Heart left ventricle (tissue), 16 donors: ENCODE measurements at regions of chr4 and their contacts with region 1.

Region 1: DNA sequence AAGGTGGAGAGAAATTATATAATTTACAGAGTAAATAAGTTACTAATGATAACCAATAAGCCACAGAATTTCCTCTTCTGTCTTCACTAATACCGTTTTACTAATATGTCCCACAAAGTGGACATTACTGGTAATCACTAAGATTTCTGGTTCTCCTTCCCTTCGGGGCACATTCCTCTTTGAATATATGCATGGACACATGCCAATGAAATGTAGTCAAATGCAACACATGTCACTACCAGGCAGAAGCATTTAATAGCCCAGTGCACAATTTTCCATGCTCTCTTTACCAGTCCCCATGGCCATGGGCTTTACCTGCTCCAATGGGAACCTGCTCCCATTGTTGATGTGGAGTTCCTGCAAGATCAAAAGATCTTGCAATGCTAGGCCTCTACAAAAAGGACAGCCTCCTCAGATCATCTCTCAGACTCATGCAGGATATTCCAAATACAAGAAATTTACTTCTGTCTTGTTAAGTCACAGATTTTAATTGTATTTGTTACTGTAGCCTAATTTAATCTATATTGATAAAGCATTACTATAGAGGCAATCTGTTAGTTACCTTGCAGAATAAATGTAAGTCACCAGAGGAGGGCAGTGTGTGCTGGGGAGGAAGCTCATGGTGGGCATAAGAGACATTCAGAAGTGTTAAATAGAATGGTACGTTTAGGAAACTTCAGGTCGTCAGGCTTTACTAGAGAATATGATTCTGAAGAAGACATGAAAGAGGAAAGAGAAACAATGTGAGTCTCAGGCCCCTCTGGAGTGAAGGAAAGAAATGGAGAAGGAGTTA is 37.1 kb upstream of the INPP4B start:
- DNase-seq: no peak
- ATAC-seq: peak in 1 of 4 donors; percentile 53
- H3K4me3 ChIP-seq: no peak overlapping the region
- H3K27ac ChIP-seq: no peak overlapping the region
- H3K4me1 ChIP-seq: no peaks in the 10 kb centered on the region
- H3K27me3 ChIP-seq: no peaks in the 10 kb centered on the region
- CTCF ChIP-seq: peak in 10 of 12 donors; percentile 27 to 53 (median 38)
- POLR2A ChIP-seq: no peak

Region 2: GRCh38 chr4:142405021-142405694 is 478.1 kb before region 1 on chr4:
- intact Hi-C with region 1: no loop called
- DNase-seq: peak in 4 of 5 donors; percentile 45 to 64 (median 50)
- ATAC-seq: peak; percentile 59 to 82 (median 75)
- H3K4me3 ChIP-seq: peak overlapping the region; percentile 11 to 67 (median 56)
- H3K27ac ChIP-seq: peak overlapping the region; percentile 37 to 90 (median 76)
- H3K4me1 ChIP-seq: peaks cover 0 to 61% (median 40%) of the 10 kb centered on the region in 12 donors
- H3K27me3 ChIP-seq: no peaks in the 10 kb centered on the region
- CTCF ChIP-seq: no peak
- POLR2A ChIP-seq: no peak

Region 3: GRCh38 chr4:142861351-142861750 is 21.9 kb before region 1 on chr4:
- intact Hi-C with region 1: no loop called
- DNase-seq: no peak
- ATAC-seq: no peak
- H3K4me3 ChIP-seq: no peak overlapping the region
- H3K27ac ChIP-seq: no peak overlapping the region
- H3K4me1 ChIP-seq: peaks cover 0 to 5% (median 0%) of the 10 kb centered on the region in 12 donors
- H3K27me3 ChIP-seq: no peaks in the 10 kb centered on the region
- CTCF ChIP-seq: no peak
- POLR2A ChIP-seq: no peak

Region 4: DNA sequence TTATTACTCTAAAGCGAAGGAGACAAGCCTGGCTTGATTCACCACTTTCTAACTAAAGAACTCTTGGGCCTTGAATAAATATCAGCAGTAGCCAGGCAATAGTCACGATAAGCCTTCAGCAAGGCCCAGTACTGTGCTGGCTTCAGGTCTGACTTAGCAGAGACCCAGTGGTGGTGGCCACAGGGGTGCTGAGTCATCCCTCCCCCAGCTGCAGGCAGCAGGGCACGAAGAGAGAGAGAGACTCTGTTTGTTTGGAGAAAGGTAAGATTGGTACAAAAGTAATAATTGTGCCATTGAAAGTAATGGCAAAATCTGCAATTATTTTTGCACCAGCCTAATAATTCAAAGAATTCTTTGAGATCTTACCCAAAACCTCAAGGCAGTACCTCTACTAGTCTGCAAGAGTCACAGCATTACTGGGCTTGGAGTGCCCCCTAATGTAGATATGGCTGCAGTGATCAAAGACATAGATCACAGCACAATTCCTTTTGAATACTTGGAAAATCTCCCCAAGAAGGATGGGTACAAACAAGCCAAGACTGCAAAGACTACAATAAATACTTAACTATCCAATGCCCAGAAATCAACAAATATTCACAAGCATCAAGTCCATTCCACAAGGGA is 142.0 kb after region 1 on chr4:
- intact Hi-C with region 1: loop called in 6 of 10 experiments (anchors 5 to 10 kb)
- DNase-seq: no peak
- ATAC-seq: peak; percentile 55 to 70 (median 61)
- H3K4me3 ChIP-seq: no peak overlapping the region
- H3K27ac ChIP-seq: no peak overlapping the region
- H3K4me1 ChIP-seq: peaks cover 0 to 26% (median 0%) of the 10 kb centered on the region in 12 donors
- H3K27me3 ChIP-seq: no peaks in the 10 kb centered on the region
- CTCF ChIP-seq: peak in 10 of 12 donors; percentile 16 to 51 (median 32)
- POLR2A ChIP-seq: no peak

Region 5: GRCh38 chr4:143482840-143483239 is 599.6 kb after region 1 on chr4:
- intact Hi-C with region 1: loop called in 1 of 10 experiments (anchors 10 kb)
- DNase-seq: peak in 1 of 5 donors; percentile 23
- ATAC-seq: peak in 3 of 4 donors; percentile 20 to 72 (median 57)
- H3K4me3 ChIP-seq: no peak overlapping the region
- H3K27ac ChIP-seq: no peak overlapping the region
- H3K4me1 ChIP-seq: peaks cover 0 to 6% (median 0%) of the 10 kb centered on the region in 12 donors
- H3K27me3 ChIP-seq: no peaks in the 10 kb centered on the region
- CTCF ChIP-seq: peak; percentile 38 to 79 (median 68)
- POLR2A ChIP-seq: no peak